ENCODE measurements at regions of chr17 and their contacts with region 1.

Region 1: GRCh38 chr17:3738562-3739295 is 15.0 kb downstream of the HASPIN start:
- DNase-seq: no peak
- ATAC-seq: peak; percentile 43
- H3K4me3 Mint-ChIP-seq: no peak overlapping the region
- H3K27ac Mint-ChIP-seq: peak overlapping the region; percentile 70
- H3K4me1 Mint-ChIP-seq: peaks cover 34% of the 10 kb centered on the region
- H3K27me3 Mint-ChIP-seq: no peaks in the 10 kb centered on the region
- CTCF ChIP-seq: no peak

Region 2: GRCh38 chr17:3636154-3636907 is 102.4 kb before region 1 on chr17 and contains the starts of genes CTNS and SHPK:
- CTCF ChIA-PET with region 1: no interaction called
- POLR2A ChIA-PET with region 1: no interaction called
- intact Hi-C with region 1: no loop called
- DNase-seq: peak; percentile 93
- ATAC-seq: peak; percentile 98
- H3K4me3 Mint-ChIP-seq: peak within 1 kb of the TSS; percentile 98
- H3K27ac Mint-ChIP-seq: peak within 1 kb of the TSS; percentile 100
- H3K4me1 Mint-ChIP-seq: peaks cover 26% of the 10 kb centered on the region
- H3K27me3 Mint-ChIP-seq: no peaks in the 10 kb centered on the region
- CTCF ChIP-seq: no peak
- total RNA-seq, gene CTNS: 12.8 and 13.5 TPM in 2 replicates
- total RNA-seq, gene SHPK: 8.1 and 9.5 TPM in 2 replicates

Region 3: DNA sequence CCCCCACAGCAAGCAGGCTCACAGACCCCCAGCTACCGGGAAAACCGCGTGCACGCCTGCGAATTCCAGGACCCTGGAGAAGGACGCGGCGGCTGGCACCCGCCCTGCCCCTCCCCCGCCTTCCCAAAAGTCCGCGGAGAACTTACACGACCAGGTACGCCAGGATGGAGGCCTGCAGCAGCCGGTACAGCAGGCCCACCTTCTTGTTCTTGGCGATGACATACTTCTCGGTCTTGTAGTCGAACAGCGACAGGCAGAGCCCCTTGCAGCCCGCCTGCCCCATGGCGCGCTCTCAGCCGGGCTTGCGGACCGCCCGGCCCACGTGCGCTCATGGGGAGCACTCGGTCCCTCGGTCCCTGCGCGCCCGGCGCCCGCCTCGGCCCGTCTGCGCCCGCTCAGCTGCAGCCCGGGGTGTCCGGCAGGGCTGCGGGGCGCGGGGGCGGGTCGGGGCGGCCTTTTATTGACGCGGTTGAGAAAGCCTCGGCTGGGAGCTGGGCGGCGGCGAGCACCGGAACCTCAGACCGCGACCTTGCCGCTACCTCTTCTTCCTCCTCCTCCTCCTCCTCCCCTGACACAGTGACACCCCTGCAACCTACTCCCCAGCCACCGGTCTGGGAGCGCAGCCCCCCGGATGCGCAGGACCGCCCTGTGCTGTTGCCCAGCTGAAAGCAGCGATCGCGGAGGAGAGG is 42.9 kb before region 1 on chr17 and contains the start of gene P2RX5:
- CTCF ChIA-PET with region 1: interaction called, 22 read pairs
- POLR2A ChIA-PET with region 1: interaction called, 14 read pairs
- intact Hi-C with region 1: no loop called
- DNase-seq: peak; percentile 66
- ATAC-seq: peak; percentile 58
- H3K4me3 Mint-ChIP-seq: peak within 1 kb of the TSS; percentile 99
- H3K27ac Mint-ChIP-seq: peak within 1 kb of the TSS; percentile 97
- H3K4me1 Mint-ChIP-seq: peaks cover 77% of the 10 kb centered on the region
- H3K27me3 Mint-ChIP-seq: no peaks in the 10 kb centered on the region
- CTCF ChIP-seq: no peak
- total RNA-seq, gene P2RX5: 295 and 349 TPM in 2 replicates

Region 4: GRCh38 chr17:3762922-3763776 is 24.4 kb after region 1 on chr17:
- CTCF ChIA-PET with region 1: interaction called, 10 read pairs
- POLR2A ChIA-PET with region 1: interaction called, 6 read pairs
- intact Hi-C with region 1: loop called (anchors 2 kb)
- DNase-seq: no peak
- ATAC-seq: peak; percentile 54
- H3K4me3 Mint-ChIP-seq: peak overlapping the region; percentile 59
- H3K27ac Mint-ChIP-seq: peak overlapping the region; percentile 85
- H3K4me1 Mint-ChIP-seq: peaks cover 21% of the 10 kb centered on the region
- H3K27me3 Mint-ChIP-seq: no peaks in the 10 kb centered on the region
- CTCF ChIP-seq: no peak

Region 5: DNA sequence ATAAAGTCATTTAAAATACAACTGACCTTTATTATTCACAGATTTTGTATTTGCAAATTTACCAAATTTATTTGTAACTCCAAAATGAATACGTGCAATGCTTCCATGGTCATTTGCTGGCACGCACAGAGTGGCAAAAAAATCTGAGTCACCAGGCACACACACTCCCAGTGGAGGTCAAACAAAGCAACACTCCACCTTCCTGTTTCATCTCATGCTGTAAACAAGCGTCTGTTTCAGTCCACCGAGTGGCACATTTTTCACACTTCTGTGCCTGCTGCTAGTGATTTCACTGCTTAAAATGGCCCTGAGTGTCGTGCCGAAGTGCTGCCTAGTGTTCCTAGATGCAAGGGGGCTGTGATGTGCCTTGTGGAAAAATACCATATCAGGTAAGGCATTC is 80.1 kb after region 1 on chr17:
- CTCF ChIA-PET with region 1: interaction called, 32 read pairs
- POLR2A ChIA-PET with region 1: interaction called, 3 read pairs
- intact Hi-C with region 1: no loop called
- DNase-seq: no peak
- ATAC-seq: peak; percentile 65
- H3K4me3 Mint-ChIP-seq: no peak overlapping the region
- H3K27ac Mint-ChIP-seq: peak overlapping the region; percentile 65
- H3K4me1 Mint-ChIP-seq: peaks cover 29% of the 10 kb centered on the region
- H3K27me3 Mint-ChIP-seq: no peaks in the 10 kb centered on the region
- CTCF ChIP-seq: no peak

Region 6: DNA sequence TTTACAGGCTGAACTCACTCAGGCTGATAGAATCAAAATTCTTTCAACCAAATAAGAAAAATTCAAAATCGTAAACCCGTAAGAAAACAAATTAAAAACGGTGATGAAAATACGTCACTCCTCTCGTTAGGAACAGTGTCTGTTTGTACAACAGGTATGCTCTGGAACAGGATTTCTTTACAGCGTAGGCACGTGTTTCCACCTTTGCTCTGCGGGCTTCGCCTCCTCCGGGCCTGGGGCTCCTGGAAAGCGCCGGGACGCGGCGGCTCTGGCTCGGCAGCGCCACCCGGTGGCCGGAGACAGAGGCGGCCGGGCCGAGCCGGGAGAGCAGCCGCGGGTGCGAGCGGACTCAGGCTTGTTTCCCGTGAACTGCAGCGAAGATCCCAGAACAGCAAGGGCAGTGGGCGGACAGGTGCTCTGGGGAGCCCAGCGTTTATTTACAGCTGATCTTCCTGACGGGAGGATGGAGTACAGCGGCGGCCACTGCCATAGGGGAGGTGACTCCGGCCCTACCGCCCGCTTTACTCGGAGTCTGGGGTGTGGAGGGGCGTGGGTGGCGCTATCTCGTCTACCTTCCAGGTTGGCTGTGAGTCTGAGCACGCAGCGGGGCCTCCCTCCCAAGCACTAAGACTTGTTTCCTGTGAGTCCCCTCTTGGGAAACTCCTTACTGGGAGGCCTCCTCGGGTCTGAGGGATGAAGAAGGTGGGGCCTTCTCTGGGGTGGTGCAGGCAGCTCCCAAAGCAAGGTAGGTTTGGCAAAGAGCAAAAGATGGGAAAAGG is 266.0 kb after region 1 on chr17:
- CTCF ChIA-PET with region 1: interaction called, 6 read pairs
- POLR2A ChIA-PET with region 1: no interaction called
- intact Hi-C with region 1: loop called (anchors 1 kb)
- DNase-seq: peak; percentile 77
- ATAC-seq: peak; percentile 80
- H3K4me3 Mint-ChIP-seq: peak overlapping the region; percentile 38
- H3K27ac Mint-ChIP-seq: no peak overlapping the region
- H3K4me1 Mint-ChIP-seq: peaks cover 24% of the 10 kb centered on the region
- H3K27me3 Mint-ChIP-seq: no peaks in the 10 kb centered on the region
- CTCF ChIP-seq: peak; percentile 96

Measured in activated B cell treated with CpG ODN at 0.5 μM for 24 hours (primary cell).